CD8-positive, alpha-beta T cell (primary cell): ENCODE measurements at regions of chr1 and their contacts with region 1.

Region 1: GRCh38 chr1:28359592-28360239 is 9.8 kb upstream of the PHACTR4 start:
- DNase-seq: peak; percentile 50 to 83 (median 75)
- ATAC-seq: peak; percentile 75
- H3K4me3 ChIP-seq: no peak overlapping the region
- H3K4me3 Mint-ChIP-seq: no peak overlapping the region
- H3K27ac ChIP-seq: no peak overlapping the region
- H3K27ac Mint-ChIP-seq: no peak overlapping the region
- H3K4me1 ChIP-seq: no peaks in the 10 kb centered on the region
- H3K4me1 Mint-ChIP-seq: peaks cover 2% of the 10 kb centered on the region
- H3K27me3 ChIP-seq: no peaks in the 10 kb centered on the region
- H3K27me3 Mint-ChIP-seq: no peaks in the 10 kb centered on the region
- CTCF ChIP-seq: peak; percentile 79

Region 2: GRCh38 chr1:28235755-28236655 is 123.7 kb before region 1 on chr1 and contains the start of gene ATP5IF1:
- CTCF ChIA-PET with region 1: no interaction called
- POLR2A ChIA-PET with region 1: no interaction called
- intact Hi-C with region 1: no loop called
- DNase-seq: peak; percentile 90 to 98 (median 94)
- ATAC-seq: peak; percentile 95
- H3K4me3 ChIP-seq: peak within 1 kb of the TSS; percentile 80 to 96
- H3K4me3 Mint-ChIP-seq: no peak within 1 kb of the TSS
- H3K27ac ChIP-seq: peak within 1 kb of the TSS; percentile 84 to 96
- H3K27ac Mint-ChIP-seq: no peak within 1 kb of the TSS
- H3K4me1 ChIP-seq: peaks cover 41% of the 10 kb centered on the region
- H3K4me1 Mint-ChIP-seq: peaks cover 21% of the 10 kb centered on the region
- H3K27me3 ChIP-seq: no peaks in the 10 kb centered on the region
- H3K27me3 Mint-ChIP-seq: no peaks in the 10 kb centered on the region
- CTCF ChIP-seq: no peak
- total RNA-seq, gene ATP5IF1: 66.1 to 69.3 TPM

Region 3: DNA sequence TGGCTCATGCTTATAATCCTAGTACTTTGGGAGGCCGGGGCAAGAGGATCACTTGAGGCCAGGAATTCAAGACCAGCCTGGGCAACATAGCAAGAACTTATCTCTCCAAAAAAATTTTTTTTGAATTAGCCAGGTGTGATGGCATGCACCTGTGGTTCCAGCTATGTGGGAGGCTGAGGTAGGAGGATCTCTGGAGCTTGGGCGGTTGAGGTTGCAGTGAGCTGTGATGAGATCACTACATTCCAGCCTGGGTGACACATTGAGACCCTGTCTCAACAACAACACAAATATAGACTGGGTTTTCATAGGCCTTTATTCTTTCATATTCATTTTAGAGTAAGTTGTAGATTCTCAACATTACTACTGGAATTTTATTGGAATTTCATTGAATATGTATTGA is 18.1 kb before region 1 on chr1:
- CTCF ChIA-PET with region 1: interaction called, 10 read pairs
- POLR2A ChIA-PET with region 1: interaction called, 3 read pairs
- intact Hi-C with region 1: no loop called
- DNase-seq: no peak
- ATAC-seq: no peak
- H3K4me3 ChIP-seq: no peak overlapping the region
- H3K4me3 Mint-ChIP-seq: no peak overlapping the region
- H3K27ac ChIP-seq: no peak overlapping the region
- H3K27ac Mint-ChIP-seq: no peak overlapping the region
- H3K4me1 ChIP-seq: no peaks in the 10 kb centered on the region
- H3K4me1 Mint-ChIP-seq: peaks cover 5% of the 10 kb centered on the region
- H3K27me3 ChIP-seq: no peaks in the 10 kb centered on the region
- H3K27me3 Mint-ChIP-seq: no peaks in the 10 kb centered on the region
- CTCF ChIP-seq: no peak

Region 4: DNA sequence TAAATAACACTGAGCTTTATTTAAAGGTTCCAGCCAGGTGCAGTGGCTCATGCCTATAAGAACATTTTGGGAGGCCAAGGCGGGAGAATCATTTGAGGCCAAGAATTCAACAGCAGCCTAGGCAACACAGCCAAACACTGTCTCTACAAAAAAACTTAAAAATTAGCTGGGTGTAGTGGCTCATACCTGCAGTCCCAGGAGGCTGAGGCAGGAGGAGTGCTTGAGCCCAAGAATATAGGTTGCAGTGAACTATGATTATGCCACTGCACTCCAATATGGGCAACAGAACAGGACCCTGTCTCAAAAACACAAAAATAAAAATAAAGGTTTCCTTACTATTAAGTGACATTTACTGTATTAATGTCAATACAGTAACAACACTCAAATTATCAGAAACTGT is 281.1 kb after region 1 on chr1:
- CTCF ChIA-PET with region 1: no interaction called
- POLR2A ChIA-PET with region 1: no interaction called
- intact Hi-C with region 1: no loop called
- DNase-seq: peak in 5 of 9 experiments; percentile 22 to 60 (median 50)
- ATAC-seq: no peak
- H3K4me3 ChIP-seq: no peak overlapping the region
- H3K4me3 Mint-ChIP-seq: peak overlapping the region; percentile 26
- H3K27ac ChIP-seq: no peak overlapping the region
- H3K27ac Mint-ChIP-seq: no peak overlapping the region
- H3K4me1 ChIP-seq: peaks cover 23% of the 10 kb centered on the region
- H3K4me1 Mint-ChIP-seq: peaks cover 50% of the 10 kb centered on the region
- H3K27me3 ChIP-seq: no peaks in the 10 kb centered on the region
- H3K27me3 Mint-ChIP-seq: no peaks in the 10 kb centered on the region
- CTCF ChIP-seq: peak; percentile 58

Region 5: GRCh38 chr1:28792644-28793121 is 433.0 kb after region 1 on chr1:
- CTCF ChIA-PET with region 1: no interaction called
- POLR2A ChIA-PET with region 1: no interaction called
- intact Hi-C with region 1: no loop called
- DNase-seq: no peak
- ATAC-seq: no peak
- H3K4me3 ChIP-seq: no peak overlapping the region
- H3K4me3 Mint-ChIP-seq: no peak overlapping the region
- H3K27ac ChIP-seq: no peak overlapping the region
- H3K27ac Mint-ChIP-seq: no peak overlapping the region
- H3K4me1 ChIP-seq: no peaks in the 10 kb centered on the region
- H3K4me1 Mint-ChIP-seq: no peaks in the 10 kb centered on the region
- H3K27me3 ChIP-seq: no peaks in the 10 kb centered on the region
- H3K27me3 Mint-ChIP-seq: peaks cover 14% of the 10 kb centered on the region
- CTCF ChIP-seq: no peak